ENCODE measurements at regions of chr11 and their contacts with region 1.

Region 1: GRCh38 chr11:111230122-111230465 is 15.4 kb upstream of the POU2AF2 start:
- DNase-seq: no peak
- ATAC-seq: peak; percentile 34
- H3K4me3 ChIP-seq: peak overlapping the region in 1 of 2 experiments; percentile 6
- H3K4me3 Mint-ChIP-seq: peak overlapping the region; percentile 66
- H3K27ac ChIP-seq: no peak overlapping the region
- H3K27ac Mint-ChIP-seq: no peak overlapping the region
- H3K4me1 ChIP-seq: peaks cover 15% of the 10 kb centered on the region
- H3K4me1 Mint-ChIP-seq: peaks cover 16% of the 10 kb centered on the region
- H3K27me3 ChIP-seq: no peaks in the 10 kb centered on the region
- H3K27me3 Mint-ChIP-seq: peaks cover 22% of the 10 kb centered on the region
- CTCF ChIP-seq: no peak

Region 2: GRCh38 chr11:109946322-109946846 is 1283.7 kb before region 1 on chr11:
- CTCF ChIA-PET with region 1: no interaction called
- POLR2A ChIA-PET with region 1: no interaction called
- intact Hi-C with region 1: loop called in 1 of 2 experiments (anchors 10 kb)
- DNase-seq: peak in 8 of 9 experiments; percentile 2 to 62 (median 32)
- ATAC-seq: peak; percentile 61
- H3K4me3 ChIP-seq: no peak overlapping the region
- H3K4me3 Mint-ChIP-seq: peak overlapping the region; percentile 69
- H3K27ac ChIP-seq: no peak overlapping the region
- H3K27ac Mint-ChIP-seq: no peak overlapping the region
- H3K4me1 ChIP-seq: no peaks in the 10 kb centered on the region
- H3K4me1 Mint-ChIP-seq: peaks cover 7% of the 10 kb centered on the region
- H3K27me3 ChIP-seq: no peaks in the 10 kb centered on the region
- H3K27me3 Mint-ChIP-seq: peaks cover 2% of the 10 kb centered on the region
- CTCF ChIP-seq: peak; percentile 27

Region 3: GRCh38 chr11:110434952-110435779 is 794.9 kb before region 1 on chr11:
- CTCF ChIA-PET with region 1: interaction called, 12 read pairs
- POLR2A ChIA-PET with region 1: no interaction called
- intact Hi-C with region 1: no loop called
- DNase-seq: peak in 4 of 9 experiments; percentile 21 to 53 (median 35)
- ATAC-seq: no peak
- H3K4me3 ChIP-seq: no peak overlapping the region
- H3K4me3 Mint-ChIP-seq: no peak overlapping the region
- H3K27ac ChIP-seq: no peak overlapping the region
- H3K27ac Mint-ChIP-seq: no peak overlapping the region
- H3K4me1 ChIP-seq: peaks cover 28% of the 10 kb centered on the region
- H3K4me1 Mint-ChIP-seq: peaks cover 66% of the 10 kb centered on the region
- H3K27me3 ChIP-seq: no peaks in the 10 kb centered on the region
- H3K27me3 Mint-ChIP-seq: no peaks in the 10 kb centered on the region
- CTCF ChIP-seq: no peak

Region 4: DNA sequence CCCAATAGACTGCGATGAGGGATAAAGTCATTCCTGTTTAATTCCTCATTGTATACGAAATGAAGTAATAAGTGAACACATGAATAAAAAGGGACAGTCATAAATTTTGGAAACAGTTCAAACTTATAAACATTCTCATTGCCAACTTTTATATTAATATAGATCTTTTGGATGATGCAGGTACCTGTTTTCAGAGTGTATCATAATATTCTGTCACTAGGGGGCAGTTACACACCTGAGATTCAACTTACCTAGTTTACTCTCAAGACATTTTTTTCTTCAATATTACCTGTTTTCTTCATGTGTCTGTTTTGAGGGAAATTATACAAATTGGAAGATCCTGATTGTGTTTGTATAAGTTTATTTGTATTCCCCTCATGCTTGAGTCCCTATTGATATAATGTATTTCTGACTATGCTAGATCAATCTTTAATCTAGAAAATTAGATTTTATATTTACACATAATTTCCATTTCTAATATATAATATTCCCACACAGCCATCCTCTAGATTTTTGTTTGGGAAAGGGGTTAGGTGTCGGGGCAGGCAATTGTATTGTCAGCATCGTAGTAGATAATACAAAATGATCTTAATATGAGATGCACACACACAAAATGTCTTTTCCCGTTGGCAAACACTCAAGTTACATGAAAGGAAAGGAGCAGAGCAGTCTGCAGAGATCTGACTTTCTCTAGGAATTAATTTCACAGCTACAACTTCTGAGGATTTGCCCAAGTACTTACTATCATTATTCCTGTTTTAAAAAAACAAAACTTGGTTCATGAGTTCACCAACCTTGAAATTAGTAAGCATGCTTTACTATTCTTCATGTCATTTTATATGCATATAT is 782.0 kb before region 1 on chr11:
- CTCF ChIA-PET with region 1: interaction called, 18 read pairs
- POLR2A ChIA-PET with region 1: no interaction called
- intact Hi-C with region 1: loop called (anchors 1 kb)
- DNase-seq: peak in 2 of 9 experiments; percentile 25 to 47
- ATAC-seq: no peak
- H3K4me3 ChIP-seq: no peak overlapping the region
- H3K4me3 Mint-ChIP-seq: no peak overlapping the region
- H3K27ac ChIP-seq: no peak overlapping the region
- H3K27ac Mint-ChIP-seq: no peak overlapping the region
- H3K4me1 ChIP-seq: no peaks in the 10 kb centered on the region
- H3K4me1 Mint-ChIP-seq: peaks cover 35% of the 10 kb centered on the region
- H3K27me3 ChIP-seq: no peaks in the 10 kb centered on the region
- H3K27me3 Mint-ChIP-seq: no peaks in the 10 kb centered on the region
- CTCF ChIP-seq: peak; percentile 79

Region 5: DNA sequence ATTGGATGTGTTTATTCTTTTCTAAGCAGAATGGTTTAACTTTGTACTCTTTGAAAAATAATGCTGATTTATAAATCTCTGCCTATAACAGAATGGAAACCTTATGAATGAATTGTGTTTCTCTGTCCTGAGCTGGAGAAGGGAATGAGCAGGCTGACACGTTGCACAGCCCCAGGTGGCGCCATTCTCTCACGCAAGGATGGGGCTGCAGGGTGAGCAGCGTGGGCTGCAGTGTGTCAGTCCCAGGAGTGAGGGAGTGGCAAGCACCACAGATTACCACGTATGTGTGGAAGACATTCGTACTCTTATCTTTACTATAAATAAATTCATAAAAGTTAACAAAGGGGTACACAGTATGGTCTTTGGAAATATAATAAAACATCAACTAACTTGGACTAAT is 766.9 kb before region 1 on chr11:
- CTCF ChIA-PET with region 1: interaction called, 5 read pairs
- POLR2A ChIA-PET with region 1: no interaction called
- intact Hi-C with region 1: loop called (anchors 1 to 5 kb)
- DNase-seq: peak in 4 of 9 experiments; percentile 21 to 60 (median 42)
- ATAC-seq: no peak
- H3K4me3 ChIP-seq: no peak overlapping the region
- H3K4me3 Mint-ChIP-seq: no peak overlapping the region
- H3K27ac ChIP-seq: no peak overlapping the region
- H3K27ac Mint-ChIP-seq: no peak overlapping the region
- H3K4me1 ChIP-seq: no peaks in the 10 kb centered on the region
- H3K4me1 Mint-ChIP-seq: peaks cover 5% of the 10 kb centered on the region
- H3K27me3 ChIP-seq: no peaks in the 10 kb centered on the region
- H3K27me3 Mint-ChIP-seq: no peaks in the 10 kb centered on the region
- CTCF ChIP-seq: no peak

Region 6: DNA sequence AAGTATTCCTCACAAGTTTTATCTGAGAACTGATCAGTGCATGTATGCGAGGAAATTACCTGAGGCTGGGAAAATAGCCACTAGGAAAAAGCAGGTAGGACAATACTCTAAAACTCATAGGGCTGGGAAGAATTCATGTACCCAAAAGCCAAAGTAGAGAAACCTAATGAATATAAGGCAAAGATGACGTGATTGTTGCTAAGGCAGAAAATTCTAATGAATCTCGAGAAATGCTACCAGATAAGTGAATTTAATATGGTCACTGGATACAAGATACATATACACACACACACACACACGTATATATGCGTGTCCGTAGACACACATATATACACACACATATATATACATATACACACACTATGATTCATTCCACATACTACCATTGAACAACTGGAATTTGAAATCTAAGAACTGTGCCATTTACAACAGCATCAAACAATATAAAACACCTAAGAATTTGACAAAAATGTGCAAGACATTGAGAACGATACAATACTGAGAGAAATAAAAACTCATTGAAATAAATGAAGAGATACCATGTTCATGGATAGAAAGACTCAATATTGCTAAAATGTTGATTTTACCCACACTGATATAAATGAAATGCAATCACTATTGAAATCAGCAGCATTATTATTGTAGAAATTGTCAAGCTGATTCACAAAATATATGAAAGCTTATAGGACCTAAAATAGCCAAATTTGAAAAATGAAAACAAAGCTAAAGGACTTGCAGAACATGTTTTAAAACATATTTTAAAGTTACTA is 564.2 kb before region 1 on chr11:
- CTCF ChIA-PET with region 1: no interaction called
- POLR2A ChIA-PET with region 1: no interaction called
- intact Hi-C with region 1: no loop called
- DNase-seq: no peak
- ATAC-seq: no peak
- H3K4me3 ChIP-seq: no peak overlapping the region
- H3K4me3 Mint-ChIP-seq: no peak overlapping the region
- H3K27ac ChIP-seq: no peak overlapping the region
- H3K27ac Mint-ChIP-seq: no peak overlapping the region
- H3K4me1 ChIP-seq: no peaks in the 10 kb centered on the region
- H3K4me1 Mint-ChIP-seq: no peaks in the 10 kb centered on the region
- H3K27me3 ChIP-seq: no peaks in the 10 kb centered on the region
- H3K27me3 Mint-ChIP-seq: no peaks in the 10 kb centered on the region
- CTCF ChIP-seq: no peak

Region 7: GRCh38 chr11:110711776-110712658 is 518.1 kb before region 1 on chr11 and contains the start of gene ARHGAP20:
- CTCF ChIA-PET with region 1: no interaction called
- POLR2A ChIA-PET with region 1: no interaction called
- intact Hi-C with region 1: loop called in 1 of 2 experiments (anchors 5 kb)
- DNase-seq: peak in 7 of 9 experiments; percentile 0 to 72 (median 28)
- ATAC-seq: peak; percentile 86
- H3K4me3 ChIP-seq: peak within 1 kb of the TSS; percentile 48
- H3K4me3 Mint-ChIP-seq: peak within 1 kb of the TSS; percentile 81
- H3K27ac ChIP-seq: no peak within 1 kb of the TSS
- H3K27ac Mint-ChIP-seq: no peak within 1 kb of the TSS
- H3K4me1 ChIP-seq: no peaks in the 10 kb centered on the region
- H3K4me1 Mint-ChIP-seq: peaks cover 15% of the 10 kb centered on the region
- H3K27me3 ChIP-seq: peaks cover 6 to 13% of the 10 kb centered on the region in 2 experiments
- H3K27me3 Mint-ChIP-seq: peaks cover 51% of the 10 kb centered on the region
- CTCF ChIP-seq: no peak
- total RNA-seq, gene ARHGAP20: 0.06 TPM in 1 of 2 experiments, not detected in the other

Region 8: DNA sequence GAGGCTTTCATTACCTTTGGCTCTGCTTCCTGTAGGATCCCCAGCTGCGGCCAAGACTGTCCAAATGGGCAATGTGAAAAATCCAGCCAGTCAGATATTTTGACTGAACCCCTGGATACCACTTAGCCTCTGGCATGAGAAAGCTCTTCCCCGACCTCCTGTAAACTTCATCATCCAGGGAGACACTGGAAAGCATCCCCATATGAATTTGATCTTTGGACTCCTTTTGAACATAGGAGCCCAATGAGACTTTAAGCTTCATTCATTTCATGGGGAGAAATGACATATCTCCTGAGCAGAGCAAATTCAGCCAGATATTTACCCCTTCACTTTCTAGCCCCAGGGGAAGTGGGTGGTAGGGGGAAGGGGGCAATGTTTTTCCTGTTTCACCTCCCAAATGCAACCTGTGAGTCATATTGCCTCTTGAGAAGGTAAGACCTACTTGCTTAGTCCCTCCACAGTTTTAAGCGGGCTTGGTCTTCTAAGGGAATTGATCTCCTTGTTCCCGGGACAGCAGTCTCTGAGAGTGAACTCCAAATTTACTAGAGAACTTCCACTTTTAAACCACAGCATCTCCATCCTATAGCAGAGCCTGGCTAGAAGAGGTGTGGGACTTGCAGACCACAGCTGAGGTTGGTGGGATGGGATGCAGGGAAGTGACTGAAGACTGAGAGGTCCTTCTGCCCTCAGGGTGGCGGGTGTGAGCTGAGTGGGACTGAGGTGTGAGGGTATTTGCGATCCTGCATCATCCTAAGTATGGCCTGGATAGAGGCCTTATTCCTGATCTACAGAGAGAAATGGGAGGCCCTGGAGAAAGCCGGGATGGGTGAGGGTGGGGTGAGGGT is 169.3 kb after region 1 on chr11:
- CTCF ChIA-PET with region 1: no interaction called
- POLR2A ChIA-PET with region 1: no interaction called
- intact Hi-C with region 1: no loop called
- DNase-seq: no peak
- ATAC-seq: no peak
- H3K4me3 ChIP-seq: no peak overlapping the region
- H3K4me3 Mint-ChIP-seq: no peak overlapping the region
- H3K27ac ChIP-seq: no peak overlapping the region
- H3K27ac Mint-ChIP-seq: no peak overlapping the region
- H3K4me1 ChIP-seq: no peaks in the 10 kb centered on the region
- H3K4me1 Mint-ChIP-seq: peaks cover 5% of the 10 kb centered on the region
- H3K27me3 ChIP-seq: no peaks in the 10 kb centered on the region
- H3K27me3 Mint-ChIP-seq: no peaks in the 10 kb centered on the region
- CTCF ChIP-seq: no peak

Region 9: GRCh38 chr11:111549196-111549868 is 319.2 kb after region 1 on chr11:
- CTCF ChIA-PET with region 1: no interaction called
- POLR2A ChIA-PET with region 1: no interaction called
- intact Hi-C with region 1: no loop called
- DNase-seq: no peak
- ATAC-seq: no peak
- H3K4me3 ChIP-seq: no peak overlapping the region
- H3K4me3 Mint-ChIP-seq: no peak overlapping the region
- H3K27ac ChIP-seq: no peak overlapping the region
- H3K27ac Mint-ChIP-seq: no peak overlapping the region
- H3K4me1 ChIP-seq: no peaks in the 10 kb centered on the region
- H3K4me1 Mint-ChIP-seq: no peaks in the 10 kb centered on the region
- H3K27me3 ChIP-seq: no peaks in the 10 kb centered on the region
- H3K27me3 Mint-ChIP-seq: no peaks in the 10 kb centered on the region
- CTCF ChIP-seq: no peak

Measured in CD8-positive, alpha-beta T cell (primary cell).